ENCODE measurements at regions of chr2 and their contacts with region 1.

Region 1: GRCh38 chr2:215843579-215843978 is 169.8 kb downstream of the MREG start:
- H3K4me3 Mint-ChIP-seq: no peak overlapping the region
- H3K27ac Mint-ChIP-seq: no peak overlapping the region
- H3K4me1 Mint-ChIP-seq: peaks cover 19% of the 10 kb centered on the region
- H3K27me3 Mint-ChIP-seq: peaks cover 11% of the 10 kb centered on the region

Region 2: DNA sequence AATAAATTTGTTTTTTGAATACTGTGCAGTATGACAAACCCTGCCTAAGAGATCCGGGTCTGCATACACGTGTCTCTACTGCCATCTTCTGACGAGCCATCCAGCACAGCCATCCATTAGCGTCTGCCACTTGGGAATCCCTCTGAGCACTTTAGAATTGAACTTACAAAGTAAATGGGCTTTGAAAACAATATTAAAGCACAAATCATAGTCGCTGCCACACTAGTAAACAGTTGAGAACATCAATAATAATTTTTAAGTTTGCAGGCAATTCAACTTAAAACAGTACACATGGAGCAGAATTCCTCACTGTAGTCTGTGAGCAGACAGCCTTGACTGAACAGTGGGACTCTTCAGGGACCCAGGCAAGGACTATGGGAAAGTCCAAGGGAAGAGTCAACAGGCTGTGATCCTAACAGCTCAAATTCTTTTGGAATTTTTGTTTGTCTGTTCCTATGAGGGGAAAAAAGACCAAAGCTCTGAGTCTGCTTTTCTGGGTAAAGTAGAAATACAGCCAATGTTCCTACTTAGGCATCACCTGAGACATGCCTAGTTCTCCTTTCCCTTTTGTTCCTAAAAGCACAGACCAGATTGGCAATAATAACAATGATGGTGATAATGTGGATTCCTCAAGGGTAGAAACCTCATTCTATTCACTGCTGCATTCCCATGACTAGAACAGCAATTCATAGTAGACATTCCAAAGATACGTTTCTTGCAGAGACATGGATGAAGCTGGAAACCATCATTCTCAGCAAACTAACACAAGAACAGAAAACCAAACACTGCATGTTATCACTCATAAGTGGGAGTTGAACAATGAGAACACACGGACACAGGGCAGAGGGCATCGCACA is 76.9 kb after region 1 on chr2:
- intact Hi-C with region 1: loop called (anchors 5 kb)
- H3K4me3 Mint-ChIP-seq: no peak overlapping the region
- H3K27ac Mint-ChIP-seq: peak overlapping the region; percentile 93
- H3K4me1 Mint-ChIP-seq: peaks cover 40% of the 10 kb centered on the region
- H3K27me3 Mint-ChIP-seq: peaks cover 14% of the 10 kb centered on the region